ENCODE measurements at regions of chr7 and their contacts with region 1.

Region 1: GRCh38 chr7:124618871-124619270 is 146.7 kb downstream of the GPR37 start:
- DNase-seq: no peak
- H3K4me3 ChIP-seq: no peak overlapping the region
- H3K27ac ChIP-seq: no peak overlapping the region
- H3K4me1 ChIP-seq: no peaks in the 10 kb centered on the region
- H3K27me3 ChIP-seq: no peaks in the 10 kb centered on the region
- CTCF ChIP-seq: no peak

Region 2: GRCh38 chr7:124440081-124440480 is 178.8 kb before region 1 on chr7:
- CTCF ChIA-PET with region 1: no interaction called
- POLR2A ChIA-PET with region 1: no interaction called
- intact Hi-C with region 1: no loop called
- DNase-seq: no peak
- H3K4me3 ChIP-seq: no peak overlapping the region
- H3K27ac ChIP-seq: no peak overlapping the region
- H3K4me1 ChIP-seq: no peaks in the 10 kb centered on the region
- H3K27me3 ChIP-seq: no peaks in the 10 kb centered on the region
- CTCF ChIP-seq: no peak

Region 3: GRCh38 chr7:124497176-124497575 is 121.7 kb before region 1 on chr7:
- CTCF ChIA-PET with region 1: interaction called, 11 read pairs
- POLR2A ChIA-PET with region 1: no interaction called
- intact Hi-C with region 1: no loop called
- DNase-seq: no peak
- H3K4me3 ChIP-seq: no peak overlapping the region
- H3K27ac ChIP-seq: no peak overlapping the region
- H3K4me1 ChIP-seq: no peaks in the 10 kb centered on the region
- H3K27me3 ChIP-seq: no peaks in the 10 kb centered on the region
- CTCF ChIP-seq: no peak

Measured in PC-9 (cell line).